ENCODE measurements at regions of chr5 and their contacts with region 1.

Region 1: GRCh38 chr5:174837919-174838902 is 113.8 kb downstream of the MSX2 start:
- DNase-seq: peak in 1 of 2 experiments; percentile 53
- H3K4me3 ChIP-seq: no peak overlapping the region
- H3K27ac ChIP-seq: no peak overlapping the region
- H3K4me1 ChIP-seq: peaks cover 0 to 1% (median 0%) of the 10 kb centered on the region in 4 experiments; a peak in 1 of 7 replicates
- H3K27me3 ChIP-seq: no peaks in the 10 kb centered on the region
- CTCF ChIP-seq: peak; percentile 35 to 74 (median 72)
- EP300 ChIP-seq: no peak
- POLR2A ChIP-seq: no peak
- RAD21 ChIP-seq: peak; percentile 68 to 75

Region 2: DNA sequence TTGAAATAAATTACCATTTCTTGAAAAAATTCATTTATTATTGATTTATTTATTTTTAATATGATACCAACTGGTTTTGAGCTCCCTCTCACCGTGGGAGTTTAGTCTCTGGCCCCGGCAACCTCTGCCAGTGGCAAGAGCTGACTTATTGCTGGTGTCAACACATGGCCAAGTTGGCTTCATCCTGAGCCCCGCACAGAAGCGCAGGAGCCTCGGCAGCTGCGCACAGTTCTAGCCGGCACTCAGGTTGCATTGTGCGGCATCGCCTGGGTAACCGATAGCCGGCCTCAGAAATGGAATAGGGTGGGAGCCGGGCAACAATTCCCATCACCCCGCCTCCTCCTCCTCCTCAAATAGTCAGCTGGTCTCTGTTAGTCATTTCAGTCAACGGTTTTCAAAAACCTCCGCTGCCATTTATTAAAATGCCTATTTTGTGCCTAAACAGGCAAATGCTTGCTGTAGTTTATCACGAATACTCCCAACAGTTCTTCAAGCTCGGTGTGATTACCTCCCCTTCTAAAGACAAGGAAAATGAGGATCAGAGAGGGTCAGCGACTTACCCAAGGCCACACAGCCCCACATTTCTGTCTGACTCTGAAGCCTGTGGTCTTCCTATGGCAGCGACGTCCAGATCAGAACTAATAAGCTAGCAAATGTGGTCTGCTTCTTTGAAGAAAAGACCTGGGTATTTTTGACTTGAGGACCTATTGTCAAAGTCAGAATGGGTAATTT is 129.6 kb before region 1 on chr5:
- CTCF ChIA-PET with region 1: no interaction called
- POLR2A ChIA-PET with region 1: no interaction called
- DNase-seq: no peak
- H3K4me3 ChIP-seq: no peak overlapping the region
- H3K27ac ChIP-seq: no peak overlapping the region
- H3K4me1 ChIP-seq: no peaks in the 10 kb centered on the region
- H3K27me3 ChIP-seq: peaks cover 0 to 2% (median under 1%) of the 10 kb centered on the region in 4 experiments; a peak in 2 of 7 replicates
- CTCF ChIP-seq: no peak
- EP300 ChIP-seq: no peak
- POLR2A ChIP-seq: no peak
- RAD21 ChIP-seq: no peak

Region 3: DNA sequence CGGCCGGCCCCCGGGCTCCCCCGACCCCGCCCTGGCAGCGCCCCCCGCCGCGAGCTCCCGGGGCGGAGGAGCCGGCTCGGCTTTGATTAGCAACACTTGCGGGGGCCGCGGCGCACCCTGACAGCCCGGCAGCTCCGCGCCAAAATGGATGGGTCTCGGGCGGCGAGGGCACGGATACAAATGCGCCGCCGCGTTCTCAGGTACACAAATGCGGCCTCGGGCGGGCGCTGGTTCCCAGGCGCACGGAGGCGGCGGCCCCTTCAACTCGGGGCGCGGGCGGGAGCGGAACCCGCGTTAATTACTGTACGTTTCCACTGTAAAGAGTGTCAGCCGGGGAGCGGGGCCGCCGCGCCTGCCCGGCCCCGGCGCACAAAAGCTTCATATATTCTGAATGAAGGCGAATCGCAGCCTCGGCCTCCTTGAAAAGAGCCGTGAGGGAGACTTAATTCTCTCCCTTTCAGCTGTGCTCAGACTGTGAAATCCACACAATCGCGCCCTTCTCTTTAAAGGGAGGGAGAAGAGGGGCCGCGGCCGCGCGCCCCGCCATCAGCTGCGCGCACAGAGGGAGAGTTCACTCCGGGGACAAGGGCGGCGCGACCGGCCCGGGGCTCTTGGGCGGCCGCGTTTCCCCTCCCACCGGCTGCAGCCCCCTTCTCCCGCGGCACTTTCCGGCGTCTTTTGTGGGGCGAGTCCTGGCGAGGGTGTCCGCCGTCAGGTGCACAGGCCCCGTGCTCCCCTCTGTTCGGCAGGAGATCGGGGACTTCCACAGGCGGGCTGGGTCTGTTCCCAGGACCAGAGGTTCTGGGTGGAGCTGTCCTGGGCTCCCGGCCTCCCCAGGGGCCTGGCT is 86.8 kb before region 1 on chr5:
- CTCF ChIA-PET with region 1: no interaction called
- POLR2A ChIA-PET with region 1: no interaction called
- DNase-seq: peak in 1 of 2 experiments; percentile 72
- H3K4me3 ChIP-seq: peak overlapping the region; percentile 42 to 77 (median 68)
- H3K27ac ChIP-seq: no peak overlapping the region
- H3K4me1 ChIP-seq: no peaks in the 10 kb centered on the region
- H3K27me3 ChIP-seq: peaks cover 15 to 54% (median 42%) of the 10 kb centered on the region in 4 experiments
- CTCF ChIP-seq: no peak
- EP300 ChIP-seq: no peak
- POLR2A ChIP-seq: no peak
- RAD21 ChIP-seq: no peak

Region 4: DNA sequence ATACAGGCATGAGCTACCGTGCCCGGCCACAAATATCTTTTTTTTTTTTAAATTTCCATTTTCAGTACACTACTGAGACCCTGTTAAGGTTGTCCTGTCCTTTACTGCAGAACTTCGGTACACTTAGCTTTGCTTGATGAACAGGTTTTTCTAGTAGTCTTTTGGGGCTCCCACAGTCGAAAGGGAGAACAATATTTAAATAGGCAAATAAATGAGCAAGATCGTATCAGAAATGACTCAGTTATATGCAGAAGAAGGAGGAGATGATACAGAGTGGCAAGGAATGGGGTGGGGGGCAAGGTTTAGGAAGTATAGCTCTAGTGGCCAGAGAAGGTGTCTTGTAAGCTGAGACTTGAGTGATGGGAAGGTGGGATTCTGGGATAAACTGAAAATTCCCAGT is 61.1 kb before region 1 on chr5:
- CTCF ChIA-PET with region 1: no interaction called
- POLR2A ChIA-PET with region 1: no interaction called
- DNase-seq: no peak
- H3K4me3 ChIP-seq: no peak overlapping the region
- H3K27ac ChIP-seq: no peak overlapping the region
- H3K4me1 ChIP-seq: no peaks in the 10 kb centered on the region
- H3K27me3 ChIP-seq: no peaks in the 10 kb centered on the region
- CTCF ChIP-seq: no peak
- EP300 ChIP-seq: no peak
- POLR2A ChIP-seq: no peak
- RAD21 ChIP-seq: no peak

Region 5: DNA sequence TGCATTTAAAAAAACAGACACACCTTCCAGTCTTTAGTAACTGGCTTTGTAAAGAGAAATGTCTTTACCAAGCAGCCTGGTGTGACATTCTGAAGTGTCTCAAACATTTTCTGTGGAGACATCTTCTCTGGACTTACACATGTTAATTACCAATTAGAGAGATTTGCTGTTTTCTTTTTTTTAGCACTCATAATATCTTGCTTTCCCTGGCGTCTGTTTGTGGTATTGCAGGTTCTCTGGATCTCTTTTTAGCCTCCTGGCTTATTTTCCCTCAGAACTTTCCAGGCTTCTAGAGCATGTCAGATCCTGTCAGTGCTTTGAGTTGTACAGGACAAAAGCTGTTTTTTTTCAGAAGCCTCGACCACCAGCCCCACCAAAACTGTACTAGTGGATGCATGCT is 21.4 kb before region 1 on chr5:
- CTCF ChIA-PET with region 1: interaction called, 12 read pairs
- POLR2A ChIA-PET with region 1: no interaction called
- DNase-seq: no peak
- H3K4me3 ChIP-seq: no peak overlapping the region
- H3K27ac ChIP-seq: no peak overlapping the region
- H3K4me1 ChIP-seq: no peaks in the 10 kb centered on the region
- H3K27me3 ChIP-seq: no peaks in the 10 kb centered on the region
- CTCF ChIP-seq: peak in 2 of 3 experiments; percentile 4 to 34; a peak in 2 of 4 replicates
- EP300 ChIP-seq: no peak
- POLR2A ChIP-seq: no peak
- RAD21 ChIP-seq: no peak

Measured in H1 (cell line).